T-cell (primary cell): ENCODE measurements at regions of chr10 and their contacts with region 1.

Region 1: DNA sequence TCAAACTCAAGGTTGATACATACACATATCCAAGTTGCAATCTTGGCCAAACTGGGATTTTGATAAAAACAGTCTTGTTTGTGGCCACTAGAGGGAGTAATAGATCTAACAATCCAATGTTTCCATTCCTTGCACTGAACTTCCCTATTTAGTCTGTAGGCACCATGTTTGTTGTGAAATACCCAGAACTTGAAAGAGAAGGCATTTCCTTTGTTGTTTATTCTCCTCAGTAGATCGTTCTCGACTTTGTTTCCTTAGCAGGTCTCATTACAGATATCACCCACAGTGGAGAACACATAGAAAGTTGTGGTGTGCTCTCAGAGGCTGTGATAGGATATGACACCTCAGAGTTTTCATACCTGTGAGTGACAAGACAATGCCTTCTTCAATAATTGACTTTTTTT is 70.3 kb upstream of the MXI1 start:
- DNase-seq: peak in 5 of 35 experiments; percentile 4 to 75 (median 14)
- ATAC-seq: peak; percentile 58 to 69 (median 64)
- H3K4me3 ChIP-seq: no peak overlapping the region
- H3K4me3 Mint-ChIP-seq: no peak overlapping the region
- H3K27ac ChIP-seq: peak overlapping the region; percentile 39
- H3K27ac Mint-ChIP-seq: peak overlapping the region in 1 of 2 donors; percentile 21
- H3K4me1 ChIP-seq: peaks cover 3 to 5% of the 10 kb centered on the region in 2 experiments
- H3K4me1 Mint-ChIP-seq: peaks cover 28 to 29% (median 28%) of the 10 kb centered on the region in 3 donors
- H3K27me3 ChIP-seq: no peaks in the 10 kb centered on the region
- H3K27me3 Mint-ChIP-seq: no peaks in the 10 kb centered on the region

Region 2: DNA sequence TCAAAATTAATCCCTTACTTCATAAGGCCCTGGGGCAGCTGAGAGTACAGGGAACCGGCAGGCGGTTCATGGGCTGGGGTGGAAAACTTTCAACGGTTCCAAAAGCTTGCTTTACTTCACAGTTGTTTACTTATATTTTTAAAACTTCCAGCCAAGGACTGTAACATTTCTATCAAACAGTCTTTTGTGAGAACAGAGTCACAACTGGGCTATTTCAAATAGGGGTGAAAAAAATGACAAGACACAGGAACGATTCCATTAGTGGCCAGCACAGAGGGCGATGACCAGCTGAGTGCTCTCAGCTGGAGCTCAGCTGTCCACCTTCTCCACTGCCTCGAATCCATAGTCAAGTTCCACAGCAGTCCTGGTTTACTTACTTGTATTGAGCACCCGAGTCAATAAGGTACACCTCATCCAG is 262.0 kb before region 1 on chr10:
- CTCF ChIA-PET with region 1: interaction called in 1 of 2 experiments, 11 read pairs
- POLR2A ChIA-PET with region 1: no interaction called
- DNase-seq: no peak
- ATAC-seq: no peak
- H3K4me3 ChIP-seq: no peak overlapping the region
- H3K4me3 Mint-ChIP-seq: no peak overlapping the region
- H3K27ac ChIP-seq: no peak overlapping the region
- H3K27ac Mint-ChIP-seq: no peak overlapping the region
- H3K4me1 ChIP-seq: no peaks in the 10 kb centered on the region
- H3K4me1 Mint-ChIP-seq: no peaks in the 10 kb centered on the region
- H3K27me3 ChIP-seq: no peaks in the 10 kb centered on the region
- H3K27me3 Mint-ChIP-seq: no peaks in the 10 kb centered on the region

Region 3: DNA sequence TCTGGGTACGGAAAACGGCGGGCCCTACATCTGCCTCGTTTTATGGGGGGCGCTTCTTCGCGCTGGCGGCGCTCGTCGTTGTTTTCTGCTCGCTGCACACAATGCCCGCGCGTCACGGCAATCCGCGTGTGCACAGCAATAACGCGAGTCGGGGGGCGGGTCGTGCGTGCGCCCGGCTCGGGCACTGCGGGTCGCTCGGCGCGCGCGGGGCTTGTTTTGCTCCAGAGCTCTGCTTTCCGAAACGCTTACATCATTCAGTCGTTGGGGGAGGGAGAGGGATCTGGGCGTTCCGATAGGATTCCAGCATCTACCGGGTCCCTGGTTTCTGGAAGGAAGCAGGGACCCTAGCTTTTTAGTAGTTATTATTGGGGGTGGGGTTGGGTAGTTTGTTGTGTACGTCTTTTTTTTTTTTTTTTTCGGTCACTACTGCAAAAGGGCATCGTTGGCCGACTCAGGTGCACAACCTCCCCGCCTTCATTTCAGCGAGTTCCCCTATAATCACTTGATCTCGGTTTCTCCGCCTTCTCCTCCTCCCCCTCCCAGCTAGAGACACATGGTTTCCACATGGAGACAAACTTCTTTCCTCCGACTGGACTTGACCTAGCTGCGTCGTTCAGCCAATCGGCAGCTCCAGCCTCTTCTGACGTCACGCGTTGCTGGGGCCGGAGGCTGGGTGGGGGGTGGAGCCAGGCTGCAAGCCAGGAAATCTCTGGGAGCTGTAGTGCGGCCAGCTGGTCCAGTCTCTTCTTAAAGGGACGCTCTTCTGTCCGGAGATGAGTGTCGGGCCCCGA is 73.7 kb after region 1 on chr10:
- CTCF ChIA-PET with region 1: interaction called, 6 to 26 read pairs
- POLR2A ChIA-PET with region 1: interaction called, 3 to 5 read pairs
- DNase-seq: peak; percentile 79 to 94 (median 86)
- ATAC-seq: peak; percentile 56 to 65 (median 58)
- H3K4me3 ChIP-seq: peak overlapping the region; percentile 89 to 91
- H3K4me3 Mint-ChIP-seq: peak overlapping the region; percentile 89 to 96 (median 91)
- H3K27ac ChIP-seq: peak overlapping the region; percentile 93
- H3K27ac Mint-ChIP-seq: peak overlapping the region; percentile 96 to 98
- H3K4me1 ChIP-seq: peaks cover 27 to 71% of the 10 kb centered on the region in 2 experiments
- H3K4me1 Mint-ChIP-seq: peaks cover 52 to 65% (median 60%) of the 10 kb centered on the region in 3 donors
- H3K27me3 ChIP-seq: peaks cover 0 to 14% of the 10 kb centered on the region in 2 experiments
- H3K27me3 Mint-ChIP-seq: no peaks in the 10 kb centered on the region

Region 4: DNA sequence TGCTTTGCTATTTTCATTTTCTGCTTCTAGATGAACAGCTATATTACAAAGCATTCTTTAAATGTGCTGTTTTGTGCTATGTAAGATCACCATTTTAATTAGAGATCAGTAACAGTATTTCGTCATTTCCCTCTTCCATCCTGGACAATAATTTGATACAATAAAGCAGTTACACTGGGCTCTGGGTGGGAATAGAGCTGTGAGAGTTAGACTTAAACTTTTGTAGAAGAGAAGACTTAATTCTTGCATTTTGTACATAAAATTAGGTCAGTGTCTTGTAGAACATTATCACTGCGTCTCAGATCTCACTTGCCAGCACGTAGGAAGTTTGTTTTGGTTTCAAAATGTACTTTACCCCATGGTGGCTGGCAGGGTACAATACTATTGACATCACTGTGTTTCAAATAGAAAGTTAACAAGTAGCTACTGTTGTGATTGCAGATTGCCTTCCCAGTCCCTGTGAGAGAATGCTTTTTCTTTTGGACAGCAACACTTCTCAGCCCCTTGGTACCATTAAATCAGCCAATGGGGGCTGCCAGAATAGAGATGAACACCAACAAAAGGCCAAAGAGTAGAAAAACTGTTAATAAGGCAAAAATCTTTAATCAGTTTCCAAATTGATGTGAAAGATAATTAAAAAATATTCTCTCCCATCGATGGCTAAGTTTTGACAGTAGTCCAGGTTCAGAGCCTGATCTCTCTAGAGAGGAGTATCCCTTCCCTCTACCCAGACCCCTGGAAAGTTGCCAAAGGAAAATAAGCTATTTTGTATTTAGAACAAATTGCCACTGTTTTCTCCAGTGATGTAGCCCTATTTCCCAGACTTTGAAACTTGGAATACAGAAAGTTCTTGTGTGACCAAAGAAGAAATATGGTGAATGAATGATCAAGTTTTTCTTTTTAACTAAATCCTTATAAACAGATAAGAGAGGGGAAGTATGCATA is 132.5 kb after region 1 on chr10:
- CTCF ChIA-PET with region 1: interaction called, 10 to 16 read pairs
- POLR2A ChIA-PET with region 1: interaction called in 1 of 2 experiments, 3 read pairs
- DNase-seq: peak in 16 of 35 experiments; percentile 1 to 38 (median 10)
- ATAC-seq: peak in 2 of 4 experiments; percentile 33 to 78
- H3K4me3 ChIP-seq: peak overlapping the region in 1 of 2 donors; percentile 18
- H3K4me3 Mint-ChIP-seq: peak overlapping the region; percentile 64 to 74 (median 69)
- H3K27ac ChIP-seq: peak overlapping the region; percentile 18
- H3K27ac Mint-ChIP-seq: peak overlapping the region; percentile 85
- H3K4me1 ChIP-seq: peaks cover 3 to 6% of the 10 kb centered on the region in 2 experiments
- H3K4me1 Mint-ChIP-seq: peaks cover 60 to 69% (median 64%) of the 10 kb centered on the region in 3 donors
- H3K27me3 ChIP-seq: no peaks in the 10 kb centered on the region
- H3K27me3 Mint-ChIP-seq: no peaks in the 10 kb centered on the region

Region 5: DNA sequence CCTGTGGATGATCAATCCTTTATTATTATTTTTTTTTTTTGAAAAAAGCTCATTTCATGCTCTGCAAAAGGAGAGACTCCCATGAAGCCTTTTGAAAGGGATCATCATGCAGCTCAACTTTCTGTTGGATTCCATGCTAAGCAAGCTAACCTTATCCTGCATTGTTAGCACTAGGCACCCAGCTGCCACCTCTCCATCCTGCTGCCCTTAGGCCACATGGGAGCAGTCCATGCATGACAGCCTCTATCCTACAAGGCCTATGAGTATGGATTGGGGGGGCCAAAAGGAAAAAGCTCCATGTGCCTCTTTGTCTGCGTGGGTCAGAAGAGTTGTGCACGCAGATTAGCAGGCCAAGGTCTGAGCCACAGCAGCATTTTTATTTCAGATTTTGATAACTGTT is 148.4 kb after region 1 on chr10:
- CTCF ChIA-PET with region 1: interaction called, 7 to 43 read pairs
- POLR2A ChIA-PET with region 1: interaction called in 1 of 2 experiments, 3 read pairs
- DNase-seq: no peak
- ATAC-seq: no peak
- H3K4me3 ChIP-seq: no peak overlapping the region
- H3K4me3 Mint-ChIP-seq: no peak overlapping the region
- H3K27ac ChIP-seq: no peak overlapping the region
- H3K27ac Mint-ChIP-seq: no peak overlapping the region
- H3K4me1 ChIP-seq: no peaks in the 10 kb centered on the region
- H3K4me1 Mint-ChIP-seq: peaks cover 0 to 8% (median 5%) of the 10 kb centered on the region in 3 donors
- H3K27me3 ChIP-seq: no peaks in the 10 kb centered on the region
- H3K27me3 Mint-ChIP-seq: no peaks in the 10 kb centered on the region

Region 6: DNA sequence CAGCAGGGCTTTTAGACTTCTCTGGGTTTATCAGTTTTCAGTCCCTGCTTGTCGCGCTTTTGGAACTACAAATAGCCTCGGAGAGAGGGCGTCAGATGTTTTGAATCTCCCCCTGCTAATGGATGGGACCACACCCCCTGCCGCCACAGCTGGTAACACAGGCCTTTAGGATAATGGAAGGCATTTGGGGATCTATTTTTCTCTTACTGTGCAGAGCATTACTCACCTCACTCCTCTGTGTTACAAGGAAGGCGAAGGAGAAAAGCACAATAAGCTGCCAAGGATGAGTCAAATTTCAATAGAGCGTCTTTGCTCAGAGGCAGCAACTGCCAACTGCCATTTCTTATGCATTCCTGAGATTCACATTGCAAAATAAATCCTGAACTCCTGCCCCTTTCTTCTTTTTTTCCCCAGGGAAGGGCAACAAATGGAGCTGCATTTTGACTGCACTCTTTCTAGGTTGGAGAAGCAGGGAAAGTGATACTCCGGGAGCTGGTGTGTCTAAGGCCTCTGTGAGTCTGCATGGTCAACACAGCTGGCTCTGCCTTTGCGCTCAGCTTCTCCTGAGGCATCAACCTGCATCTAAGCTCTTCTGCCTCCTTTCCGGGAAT is 199.1 kb after region 1 on chr10:
- CTCF ChIA-PET with region 1: no interaction called
- POLR2A ChIA-PET with region 1: no interaction called
- DNase-seq: no peak
- ATAC-seq: no peak
- H3K4me3 ChIP-seq: no peak overlapping the region
- H3K4me3 Mint-ChIP-seq: no peak overlapping the region
- H3K27ac ChIP-seq: no peak overlapping the region
- H3K27ac Mint-ChIP-seq: no peak overlapping the region
- H3K4me1 ChIP-seq: peaks cover 0 to 5% of the 10 kb centered on the region in 2 experiments
- H3K4me1 Mint-ChIP-seq: peaks cover 5 to 12% (median 11%) of the 10 kb centered on the region in 3 donors
- H3K27me3 ChIP-seq: peaks cover 0 to 3% of the 10 kb centered on the region in 2 experiments
- H3K27me3 Mint-ChIP-seq: no peaks in the 10 kb centered on the region